ENCODE measurements at regions of chr1 and their contacts with region 1.

Region 1: DNA sequence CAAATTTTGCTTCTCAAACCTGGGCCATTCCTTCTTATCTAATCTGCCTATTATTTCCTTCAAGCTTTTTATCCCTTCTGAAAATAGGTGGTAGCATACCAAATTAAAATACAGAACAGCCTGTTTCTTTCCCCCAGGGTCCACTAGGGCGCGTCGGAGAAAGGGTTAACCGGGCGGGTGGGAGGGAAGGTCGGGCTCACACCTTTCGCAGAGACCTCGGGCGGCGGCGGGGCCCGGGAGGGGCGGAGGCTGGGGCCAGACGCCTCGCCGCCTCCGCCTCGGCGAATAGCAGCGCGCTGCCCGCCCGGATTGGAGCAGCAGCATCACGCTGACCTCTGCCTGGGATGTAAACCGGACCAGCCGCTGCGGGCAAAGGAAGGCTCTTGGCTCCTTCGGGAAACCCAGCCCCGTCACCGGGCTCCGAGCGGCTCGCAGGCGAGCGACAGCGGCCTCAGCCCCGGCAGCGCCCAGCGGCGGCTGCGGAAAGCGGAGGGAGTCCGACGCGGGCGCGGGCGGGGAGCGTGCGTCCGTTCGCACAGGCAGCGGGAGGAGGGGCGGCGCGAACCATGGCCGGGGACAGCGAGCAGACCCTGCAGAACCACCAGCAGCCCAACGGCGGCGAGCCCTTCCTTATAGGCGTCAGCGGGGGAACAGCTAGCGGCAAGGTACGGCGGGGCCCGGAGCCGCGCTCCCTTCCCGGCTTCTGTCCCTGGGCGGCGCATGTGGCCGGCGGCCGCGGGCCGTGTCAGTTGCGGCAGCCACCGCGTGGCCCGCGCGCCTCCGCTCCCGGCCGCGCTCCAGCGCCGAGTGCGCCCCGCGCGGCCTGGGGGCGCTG is at the start of gene UCK2:
- DNase-seq: peak; percentile 87 to 89
- ATAC-seq: peak; percentile 85 to 94
- H3K4me3 ChIP-seq: peak within 1 kb of the TSS; percentile 86
- H3K27ac ChIP-seq: peak within 1 kb of the TSS; percentile 83 to 94
- H3K4me1 ChIP-seq: peaks cover 16% of the 10 kb centered on the region
- CTCF ChIP-seq: peak; percentile 26; the same call in 1 of the 3 replicates
- EP300 ChIP-seq: no peak
- POLR2A ChIP-seq: peak; percentile 73
- RAD21 ChIP-seq: peak in 1 of 2 experiments; percentile 15; a peak in 1 of 5 replicates
- polyA plus RNA-seq, gene UCK2: 98.9 and 123 TPM in 2 replicates

Region 2: GRCh38 chr1:165768513-165769394 is 58.7 kb before region 1 on chr1 and contains the start of gene TMCO1:
- CTCF ChIA-PET with region 1: interaction called, 4 read pairs
- POLR2A ChIA-PET with region 1: interaction called, 31 read pairs
- DNase-seq: peak; percentile 98 to 100
- ATAC-seq: peak; percentile 100
- H3K4me3 ChIP-seq: peak within 1 kb of the TSS; percentile 93
- H3K27ac ChIP-seq: peak within 1 kb of the TSS; percentile 91 to 92
- H3K4me1 ChIP-seq: peaks cover 39% of the 10 kb centered on the region
- CTCF ChIP-seq: no peak
- EP300 ChIP-seq: no peak
- POLR2A ChIP-seq: peak; percentile 77
- RAD21 ChIP-seq: no peak
- polyA plus RNA-seq, gene TMCO1: 220 and 241 TPM in 2 replicates

Region 3: DNA sequence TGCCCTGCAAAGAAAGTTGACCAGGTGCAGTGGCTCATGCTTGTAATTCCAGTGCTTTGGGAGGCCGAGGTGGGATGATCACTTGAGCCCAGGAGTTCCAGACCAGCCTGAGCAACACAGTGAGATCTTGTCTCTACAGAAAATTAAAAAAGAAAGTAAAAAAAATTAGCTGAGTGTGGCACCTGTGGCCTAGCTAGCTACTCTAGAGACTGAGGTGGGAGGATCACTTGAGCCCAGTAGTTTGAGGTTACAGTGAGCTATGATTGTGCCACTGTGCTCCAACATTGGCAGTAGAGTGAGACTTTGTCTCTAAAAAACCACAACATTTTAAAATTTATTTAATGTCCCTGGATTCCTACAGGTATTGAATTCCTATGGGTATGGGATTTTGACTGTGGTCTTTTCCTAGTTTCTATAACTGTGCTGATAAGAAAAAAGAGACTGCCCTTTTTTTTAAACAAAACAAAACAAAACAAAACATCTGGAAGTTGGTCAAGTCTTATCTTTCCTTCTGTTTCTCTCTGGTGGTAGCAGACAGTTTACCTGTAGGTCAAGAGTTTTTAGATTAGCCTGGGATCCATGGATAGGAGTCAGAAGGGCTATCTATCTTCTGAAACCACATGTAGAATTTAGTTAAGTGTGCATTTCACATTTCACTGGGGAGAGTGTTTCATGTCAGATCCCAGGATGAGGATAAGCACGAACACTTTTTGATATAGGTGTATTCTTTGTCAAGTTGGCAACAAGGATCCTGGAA is 18.7 kb after region 1 on chr1:
- CTCF ChIA-PET with region 1: interaction called, 11 read pairs
- POLR2A ChIA-PET with region 1: interaction called, 7 read pairs
- DNase-seq: no peak
- ATAC-seq: no peak
- H3K4me3 ChIP-seq: no peak overlapping the region
- H3K27ac ChIP-seq: no peak overlapping the region
- H3K4me1 ChIP-seq: peaks cover 34% of the 10 kb centered on the region
- CTCF ChIP-seq: no peak
- EP300 ChIP-seq: no peak
- POLR2A ChIP-seq: no peak
- RAD21 ChIP-seq: no peak